ENCODE measurements at regions of chrX and their contacts with region 1.

Region 1: DNA sequence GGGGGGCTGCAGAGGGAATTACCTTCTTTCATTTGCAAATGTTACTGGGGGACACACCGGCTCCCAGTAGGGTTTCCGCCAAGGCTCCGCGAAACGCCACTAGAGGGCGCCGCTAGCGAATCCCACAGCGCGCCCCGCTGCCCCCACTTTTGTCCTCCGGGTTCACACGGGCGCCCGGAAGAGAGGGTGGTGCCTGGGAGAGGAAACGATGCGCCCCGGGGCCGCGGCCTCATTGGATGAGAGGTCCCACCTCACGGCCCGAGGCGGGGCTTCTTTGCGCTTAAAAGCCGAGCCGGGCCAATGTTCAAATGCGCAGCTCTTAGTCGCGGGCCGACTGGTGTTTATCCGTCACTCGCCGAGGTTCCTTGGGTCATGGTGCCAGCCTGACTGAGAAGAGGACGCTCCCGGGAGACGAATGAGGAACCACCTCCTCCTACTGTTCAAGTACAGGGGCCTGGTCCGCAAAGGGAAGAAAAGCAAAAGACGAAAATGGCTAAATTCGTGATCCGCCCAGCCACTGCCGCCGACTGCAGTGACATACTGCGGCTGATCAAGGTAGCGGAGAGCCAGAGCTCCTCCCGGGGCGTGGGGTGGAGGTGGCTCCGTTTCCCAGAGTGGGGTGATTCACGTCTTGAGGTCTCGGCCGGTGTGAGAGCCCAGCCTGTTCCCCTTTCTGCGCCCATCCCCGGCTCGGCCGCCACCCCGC is at the start of gene SAT1:
- DNase-seq: peak; percentile 96
- H3K4me3 Mint-ChIP-seq: peak within 1 kb of the TSS; percentile 84
- H3K27ac Mint-ChIP-seq: peak within 1 kb of the TSS; percentile 95
- H3K4me1 Mint-ChIP-seq: peaks cover 29% of the 10 kb centered on the region
- H3K27me3 Mint-ChIP-seq: no peaks in the 10 kb centered on the region
- total RNA-seq, gene SAT1: 629 to 649 TPM

Region 2: DNA sequence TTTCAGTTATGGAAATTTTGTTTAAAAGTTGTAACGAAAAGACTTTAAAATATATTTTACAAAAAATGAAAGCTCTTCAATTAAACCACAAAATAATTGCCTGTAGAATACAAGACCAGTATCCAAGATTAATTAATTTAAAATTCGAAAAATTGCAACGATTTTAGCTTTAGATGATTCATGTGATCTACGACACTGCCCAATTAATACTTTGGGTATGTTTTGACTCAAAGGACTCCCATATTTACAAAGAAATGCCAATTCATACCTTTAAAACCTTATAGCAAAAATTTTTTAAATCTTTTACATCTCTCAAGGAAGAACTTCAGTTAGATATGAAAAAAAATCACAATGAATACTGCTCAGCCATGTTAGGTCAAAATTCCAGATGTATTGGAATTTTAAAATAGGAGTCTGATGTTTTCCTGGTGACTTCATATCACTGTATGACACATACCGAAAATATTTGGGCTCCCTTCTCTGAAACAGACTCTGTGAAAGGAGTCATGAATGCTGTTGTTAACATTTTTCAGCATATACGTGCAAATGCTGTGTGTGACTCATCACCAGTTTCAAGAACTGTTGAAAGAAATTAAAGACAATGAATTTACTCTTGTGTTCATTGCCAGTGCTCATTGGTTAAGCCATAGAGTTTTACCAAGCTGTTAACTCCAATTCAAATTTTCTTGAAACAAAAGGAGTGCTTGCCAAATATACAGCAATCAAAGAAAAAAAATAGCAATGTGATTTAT is 1856.3 kb before region 1 on chrX:
- CTCF ChIA-PET with region 1: no interaction called
- intact Hi-C with region 1: loop called (anchors 5 kb)
- DNase-seq: peak; percentile 26
- H3K4me3 Mint-ChIP-seq: no peak overlapping the region
- H3K27ac Mint-ChIP-seq: peak overlapping the region; percentile 68
- H3K4me1 Mint-ChIP-seq: peaks cover 26% of the 10 kb centered on the region
- H3K27me3 Mint-ChIP-seq: no peaks in the 10 kb centered on the region

Region 3: DNA sequence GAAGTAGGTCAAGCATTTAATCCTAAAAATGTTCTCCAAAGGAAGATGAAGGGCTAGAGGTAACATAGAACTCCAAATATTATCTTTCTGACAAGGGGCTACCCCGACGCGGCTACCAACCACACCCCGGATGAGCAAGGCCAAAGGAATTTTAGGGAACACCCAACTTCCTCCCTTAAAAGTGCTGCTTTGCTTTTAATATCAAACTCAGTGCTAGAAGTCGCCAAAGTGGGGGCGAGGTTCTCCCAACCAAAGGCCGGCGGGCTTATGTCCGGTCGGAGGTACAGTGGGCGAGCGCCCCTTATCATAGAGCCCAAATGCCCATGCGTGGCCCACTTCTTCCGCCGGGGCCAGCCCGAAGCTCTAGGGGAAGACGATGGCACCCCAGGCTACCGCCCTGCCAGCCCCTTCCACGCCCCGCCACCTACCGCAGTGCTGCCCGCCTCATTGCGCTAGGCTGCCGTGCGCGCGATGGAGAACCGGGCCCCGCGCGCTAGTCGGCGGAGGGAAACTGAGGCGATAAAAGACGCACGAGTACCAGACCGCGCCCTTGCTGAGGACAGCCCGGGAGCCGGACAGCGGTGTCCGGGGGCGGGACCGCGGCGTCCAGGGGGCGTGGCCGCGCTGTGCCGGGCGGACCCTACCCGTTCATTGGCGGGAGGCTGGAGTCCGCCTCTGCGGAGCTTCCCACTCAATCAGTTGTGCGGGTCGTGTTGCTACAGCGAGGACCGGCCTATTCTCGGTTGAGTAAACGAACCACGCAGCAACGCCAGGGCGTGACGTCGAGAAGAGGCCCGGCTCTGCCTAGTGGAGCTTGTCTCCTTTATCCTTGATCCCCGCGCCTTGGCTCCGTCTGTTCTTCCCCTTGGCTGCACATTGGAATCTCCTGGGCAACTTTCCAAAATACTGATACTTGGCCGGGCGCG is 40.1 kb before region 1 on chrX and contains the start of gene ACOT9:
- CTCF ChIA-PET with region 1: interaction called, 3 read pairs
- intact Hi-C with region 1: loop called (anchors 1 kb)
- DNase-seq: peak; percentile 85
- H3K4me3 Mint-ChIP-seq: peak within 1 kb of the TSS; percentile 83
- H3K27ac Mint-ChIP-seq: peak within 1 kb of the TSS; percentile 84
- H3K4me1 Mint-ChIP-seq: peaks cover 23% of the 10 kb centered on the region
- H3K27me3 Mint-ChIP-seq: no peaks in the 10 kb centered on the region
- total RNA-seq, gene ACOT9: 46.8 to 49.7 TPM

Region 4: DNA sequence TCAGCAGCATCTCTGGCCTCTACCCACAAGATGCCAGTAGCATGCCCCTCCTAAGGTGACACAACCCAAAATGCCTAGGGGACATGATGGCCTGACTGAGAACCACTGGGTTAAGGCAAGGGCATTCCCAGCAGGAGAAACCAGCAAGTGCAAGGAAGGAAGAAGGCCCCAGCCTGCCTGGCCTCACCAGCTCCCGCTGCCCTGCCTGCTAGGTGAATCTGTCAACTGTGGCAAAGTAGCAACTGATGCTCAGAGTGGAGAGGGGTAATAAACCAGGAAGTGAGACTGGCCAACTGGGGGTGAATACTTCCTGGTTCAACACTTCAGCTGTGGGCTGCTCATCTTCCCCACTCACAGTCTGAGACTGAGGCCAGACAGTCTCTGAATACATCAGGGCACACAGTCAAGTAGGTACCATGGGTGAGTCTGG is 34.2 kb after region 1 on chrX:
- CTCF ChIA-PET with region 1: no interaction called
- intact Hi-C with region 1: no loop called
- DNase-seq: no peak
- H3K4me3 Mint-ChIP-seq: no peak overlapping the region
- H3K27ac Mint-ChIP-seq: no peak overlapping the region
- H3K4me1 Mint-ChIP-seq: no peaks in the 10 kb centered on the region
- H3K27me3 Mint-ChIP-seq: no peaks in the 10 kb centered on the region

Region 5: DNA sequence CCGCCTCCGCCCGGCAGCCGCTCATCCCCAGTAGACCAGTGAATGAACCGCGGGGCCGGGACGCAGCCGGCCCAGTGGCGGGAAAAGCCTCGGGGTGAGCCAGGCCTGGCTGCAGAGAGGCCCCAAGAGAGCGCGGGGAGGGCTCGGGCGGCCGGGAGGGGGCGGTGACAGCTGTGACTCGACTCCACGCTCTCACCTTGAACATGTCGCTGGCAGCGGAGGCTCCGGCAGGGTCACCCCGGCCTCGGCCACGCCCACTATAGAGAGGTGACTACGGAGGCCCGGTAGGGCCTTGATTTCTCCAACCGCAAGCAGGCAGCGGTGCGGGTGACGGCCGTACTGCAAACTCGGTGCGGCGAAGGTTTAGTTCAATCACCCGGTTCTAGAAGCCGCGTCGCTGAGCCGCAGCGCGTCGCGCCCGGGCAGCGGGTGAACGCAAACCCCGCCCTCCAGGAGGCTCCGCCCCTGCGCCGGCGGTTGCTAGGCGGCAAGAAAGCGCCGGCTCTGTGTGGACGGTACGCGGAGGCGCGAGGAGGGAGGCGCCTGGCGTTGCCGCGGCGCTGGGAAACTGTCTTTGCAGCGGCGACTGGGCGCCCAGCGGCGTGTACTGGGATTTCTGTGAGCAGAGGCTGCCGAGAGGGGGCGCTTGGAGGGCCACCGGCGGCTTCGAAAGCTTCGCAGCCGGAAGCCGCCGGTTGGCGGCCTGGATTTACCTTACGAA is 124.6 kb after region 1 on chrX and contains the starts of genes APOO and CXorf58:
- CTCF ChIA-PET with region 1: interaction called, 58 read pairs
- intact Hi-C with region 1: loop called (anchors 1 kb)
- DNase-seq: peak; percentile 93
- H3K4me3 Mint-ChIP-seq: peak within 1 kb of the TSS; percentile 75
- H3K27ac Mint-ChIP-seq: peak within 1 kb of the TSS; percentile 91
- H3K4me1 Mint-ChIP-seq: peaks cover 21% of the 10 kb centered on the region
- H3K27me3 Mint-ChIP-seq: no peaks in the 10 kb centered on the region
- total RNA-seq, gene APOO: 41.3 to 49.5 TPM
- total RNA-seq, gene CXorf58: 0.20 TPM in 1 of 2 experiments, not detected in the other

Region 6: GRCh38 chrX:23930894-23931689 is 148.1 kb after region 1 on chrX:
- CTCF ChIA-PET with region 1: no interaction called
- intact Hi-C with region 1: no loop called
- DNase-seq: no peak
- H3K4me3 Mint-ChIP-seq: no peak overlapping the region
- H3K27ac Mint-ChIP-seq: no peak overlapping the region
- H3K4me1 Mint-ChIP-seq: peaks cover 21% of the 10 kb centered on the region
- H3K27me3 Mint-ChIP-seq: no peaks in the 10 kb centered on the region

Region 7: DNA sequence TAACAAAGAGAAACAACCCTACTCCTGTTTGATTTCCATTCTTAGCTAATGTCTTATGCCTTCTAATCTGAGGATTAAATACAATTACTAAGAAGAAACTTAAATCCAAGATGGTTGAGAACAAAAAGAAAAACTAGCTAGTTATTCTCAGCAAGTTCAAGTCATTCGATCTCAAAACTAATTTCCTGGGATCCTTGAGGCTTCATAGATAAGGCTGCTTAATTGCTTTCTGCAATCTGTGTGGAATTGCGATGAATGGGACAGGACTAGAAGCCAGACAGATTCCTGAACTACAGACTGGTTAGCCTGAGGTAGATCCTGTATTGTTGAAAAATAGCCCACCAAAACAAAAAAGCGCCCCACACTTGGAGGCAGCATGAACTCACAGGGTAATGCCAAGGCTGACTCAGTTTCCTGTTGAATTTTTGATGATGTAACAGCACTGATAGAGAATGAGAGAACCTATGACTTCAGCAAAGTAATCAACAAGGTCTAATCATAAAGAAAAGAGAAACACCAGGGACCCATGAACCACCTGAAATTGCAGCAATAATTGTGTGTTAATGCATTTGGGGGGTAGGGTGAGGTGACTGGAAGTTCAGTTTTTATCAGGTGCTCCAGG is 210.1 kb after region 1 on chrX:
- CTCF ChIA-PET with region 1: no interaction called
- intact Hi-C with region 1: no loop called
- DNase-seq: peak; percentile 14
- H3K4me3 Mint-ChIP-seq: no peak overlapping the region
- H3K27ac Mint-ChIP-seq: peak overlapping the region; percentile 83
- H3K4me1 Mint-ChIP-seq: peaks cover 38% of the 10 kb centered on the region
- H3K27me3 Mint-ChIP-seq: no peaks in the 10 kb centered on the region

Region 8: DNA sequence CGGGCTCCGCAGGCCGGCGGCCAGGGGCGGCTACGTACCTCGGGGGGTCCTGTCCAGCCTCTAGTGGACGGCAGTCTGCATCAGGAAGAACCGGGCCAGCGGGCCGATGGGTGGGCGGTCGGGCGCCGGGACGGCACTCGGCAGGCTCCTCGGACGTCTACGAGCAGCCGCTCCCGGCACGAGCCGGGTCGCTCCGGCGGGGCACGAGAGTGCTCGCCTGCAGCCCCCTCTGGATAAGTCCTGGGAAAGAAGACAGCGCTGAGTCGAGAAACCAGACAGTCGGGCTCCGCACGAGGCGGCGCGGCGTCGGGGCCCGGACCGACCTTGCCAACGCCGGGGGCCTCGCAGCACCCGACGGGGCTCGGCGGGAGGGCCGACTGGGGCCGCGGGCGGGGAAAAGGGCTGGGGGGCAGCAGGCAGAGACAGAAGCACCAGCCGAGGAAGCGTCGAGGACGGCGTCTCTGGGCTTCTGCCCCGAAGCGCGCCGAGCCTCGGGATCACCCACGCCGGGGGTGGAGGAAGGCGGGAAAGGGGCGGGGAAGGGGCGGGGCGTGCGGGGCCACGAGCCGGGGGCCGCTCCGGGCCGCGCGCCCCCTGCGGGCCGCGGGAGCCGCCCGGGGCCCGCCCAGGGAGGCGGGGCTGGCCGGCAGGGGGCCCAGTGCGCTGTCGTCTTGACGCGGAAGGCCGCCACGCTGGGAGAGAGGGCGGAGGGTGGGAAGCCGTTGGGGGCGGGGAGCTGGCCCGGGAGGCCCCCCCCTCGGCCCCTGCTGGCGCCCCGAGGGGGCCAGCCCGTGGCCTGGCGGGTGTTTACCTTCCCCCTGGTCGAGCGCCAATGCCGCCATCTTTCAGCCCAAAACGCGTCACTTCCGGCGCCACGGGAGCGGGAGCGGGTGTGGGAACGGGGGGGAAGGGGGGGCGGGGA is 242.1 kb after region 1 on chrX:
- CTCF ChIA-PET with region 1: no interaction called
- intact Hi-C with region 1: loop called (anchors 1 kb)
- DNase-seq: peak; percentile 89
- H3K4me3 Mint-ChIP-seq: peak overlapping the region; percentile 85
- H3K27ac Mint-ChIP-seq: peak overlapping the region; percentile 71
- H3K4me1 Mint-ChIP-seq: peaks cover 20% of the 10 kb centered on the region
- H3K27me3 Mint-ChIP-seq: no peaks in the 10 kb centered on the region

Region 9: GRCh38 chrX:24169211-24169610 is 386.2 kb after region 1 on chrX:
- CTCF ChIA-PET with region 1: no interaction called
- intact Hi-C with region 1: loop called (anchors 1 kb)
- DNase-seq: peak; percentile 14
- H3K4me3 Mint-ChIP-seq: peak overlapping the region; percentile 6
- H3K27ac Mint-ChIP-seq: peak overlapping the region; percentile 84
- H3K4me1 Mint-ChIP-seq: peaks cover 62% of the 10 kb centered on the region
- H3K27me3 Mint-ChIP-seq: no peaks in the 10 kb centered on the region

Region 10: DNA sequence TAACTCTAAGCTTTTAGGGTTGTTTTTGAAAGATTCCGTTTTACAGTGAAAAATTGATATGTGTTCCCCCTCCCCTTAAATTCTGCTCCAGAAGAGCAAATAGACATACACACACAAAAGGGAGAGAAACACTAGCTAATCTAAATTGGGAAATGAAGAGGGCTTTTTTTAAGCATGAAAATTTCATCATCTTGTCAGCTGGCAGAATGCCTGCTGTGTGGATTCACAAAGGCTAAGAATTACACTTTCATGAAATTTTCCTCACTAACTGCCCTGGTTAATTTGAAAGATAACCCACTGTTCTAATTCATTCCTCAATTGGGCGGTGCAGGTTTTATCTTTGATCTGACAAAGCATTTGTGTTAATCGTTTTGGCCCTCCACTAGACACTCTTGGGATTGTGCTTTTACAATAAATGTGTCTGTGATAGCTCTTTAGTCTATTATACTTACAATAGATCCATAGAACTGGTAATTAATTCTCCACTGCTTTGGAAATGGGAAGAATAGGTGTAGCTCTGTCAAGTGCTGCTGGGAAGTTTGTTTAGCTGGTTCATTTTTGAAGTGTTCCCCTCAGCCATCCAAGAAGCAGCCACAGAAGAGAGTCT is 1063.6 kb after region 1 on chrX:
- CTCF ChIA-PET with region 1: no interaction called
- intact Hi-C with region 1: no loop called
- DNase-seq: no peak
- H3K4me3 Mint-ChIP-seq: no peak overlapping the region
- H3K27ac Mint-ChIP-seq: no peak overlapping the region
- H3K4me1 Mint-ChIP-seq: no peaks in the 10 kb centered on the region
- H3K27me3 Mint-ChIP-seq: no peaks in the 10 kb centered on the region

Measured in activated naive CD4-positive, alpha-beta T cell treated with anti-CD3 and anti-CD28 coated beads for 36 hours (primary cell).